HepG2 (cell line): ENCODE measurements at regions of chr15 and their contacts with region 1.

Region 1: GRCh38 chr15:51992976-51993375 is 21.4 kb upstream of the LEO1 start:
- DNase-seq: peak; percentile 77
- ATAC-seq: peak; percentile 50
- H3K4me3 ChIP-seq: no peak overlapping the region
- H3K27ac ChIP-seq: no peak overlapping the region
- H3K4me1 ChIP-seq: peaks cover 30% of the 10 kb centered on the region
- H3K27me3 ChIP-seq: no peaks in the 10 kb centered on the region
- CTCF ChIP-seq: no peak
- EP300 ChIP-seq: peak in 1 of 2 experiments; percentile 45; a peak in 1 of 4 replicates
- POLR2A ChIP-seq: no peak
- RAD21 ChIP-seq: no peak

Region 2: DNA sequence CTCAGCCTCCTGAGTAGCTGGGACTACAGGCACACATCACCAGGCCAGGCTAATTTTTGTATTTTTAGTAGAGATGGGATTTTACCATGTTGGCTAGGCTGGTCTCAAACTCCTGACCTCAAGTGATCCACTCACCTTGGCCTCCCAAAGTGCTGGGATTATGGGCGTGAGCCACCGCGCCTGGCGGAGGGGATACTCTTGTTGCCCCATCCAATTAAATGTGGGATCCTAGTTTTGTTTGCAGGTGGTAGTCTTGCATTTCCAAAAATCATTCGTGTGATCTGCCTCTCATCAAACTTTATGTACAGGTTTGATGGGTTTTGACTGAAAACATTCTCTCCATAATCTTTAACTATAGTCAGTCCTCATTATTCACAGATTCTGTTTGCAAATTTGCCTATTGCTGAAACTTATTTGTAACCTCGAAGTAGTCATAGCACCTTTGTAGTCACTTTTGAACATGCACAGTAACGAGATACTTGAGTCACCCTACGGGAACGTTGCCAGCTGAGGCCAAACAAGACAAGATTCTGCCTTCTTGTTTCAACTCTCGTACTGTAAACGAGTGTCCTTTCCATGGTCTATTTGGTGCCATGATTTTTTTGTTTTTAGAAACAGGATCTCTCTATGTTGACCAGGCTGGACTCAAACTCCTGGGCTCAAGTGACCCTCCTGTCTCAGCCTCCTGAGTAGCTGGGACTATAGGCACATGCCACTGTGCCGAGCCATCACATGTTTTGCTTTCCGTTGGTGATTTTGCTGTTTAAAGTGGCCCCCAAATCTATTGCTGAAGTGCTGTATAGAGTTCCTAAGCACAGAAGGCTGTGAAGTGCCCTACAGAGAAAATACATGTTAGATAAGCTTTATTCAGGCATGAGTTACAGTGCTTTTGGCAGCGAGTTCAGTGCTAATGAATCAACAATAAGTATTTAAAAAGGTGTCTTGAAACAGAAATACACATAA is 17.9 kb after region 1 on chr15:
- CTCF ChIA-PET with region 1: no interaction called
- POLR2A ChIA-PET with region 1: interaction called, 14 read pairs
- in situ Hi-C with region 1: no loop called
- intact Hi-C with region 1: no loop called
- DNase-seq: peak; percentile 39
- ATAC-seq: no peak
- H3K4me3 ChIP-seq: no peak overlapping the region
- H3K27ac ChIP-seq: peak overlapping the region; percentile 52
- H3K4me1 ChIP-seq: peaks cover 66% of the 10 kb centered on the region
- H3K27me3 ChIP-seq: no peaks in the 10 kb centered on the region
- CTCF ChIP-seq: no peak
- EP300 ChIP-seq: no peak
- POLR2A ChIP-seq: no peak
- RAD21 ChIP-seq: no peak